Esophagus muscularis mucosa (tissue), 4 donors: ENCODE measurements at regions of chr3 and their contacts with region 1.

Region 1: GRCh38 chr3:131381444-131382291 is at the start of gene NUDT16:
- DNase-seq: peak; percentile 99
- H3K4me3 ChIP-seq: peak within 1 kb of the TSS; percentile 65 to 93 (median 84)
- H3K27ac ChIP-seq: peak within 1 kb of the TSS; percentile 90 to 93 (median 90)
- H3K4me1 ChIP-seq: peaks cover 30 to 60% (median 50%) of the 10 kb centered on the region in 4 donors
- H3K27me3 ChIP-seq: no peaks in the 10 kb centered on the region
- CTCF ChIP-seq: no peak
- EP300 ChIP-seq: no peak
- POLR2A ChIP-seq: peak; percentile 85
- total RNA-seq, gene NUDT16: 28.1 to 41.9 (median 34.0) TPM

Region 2: DNA sequence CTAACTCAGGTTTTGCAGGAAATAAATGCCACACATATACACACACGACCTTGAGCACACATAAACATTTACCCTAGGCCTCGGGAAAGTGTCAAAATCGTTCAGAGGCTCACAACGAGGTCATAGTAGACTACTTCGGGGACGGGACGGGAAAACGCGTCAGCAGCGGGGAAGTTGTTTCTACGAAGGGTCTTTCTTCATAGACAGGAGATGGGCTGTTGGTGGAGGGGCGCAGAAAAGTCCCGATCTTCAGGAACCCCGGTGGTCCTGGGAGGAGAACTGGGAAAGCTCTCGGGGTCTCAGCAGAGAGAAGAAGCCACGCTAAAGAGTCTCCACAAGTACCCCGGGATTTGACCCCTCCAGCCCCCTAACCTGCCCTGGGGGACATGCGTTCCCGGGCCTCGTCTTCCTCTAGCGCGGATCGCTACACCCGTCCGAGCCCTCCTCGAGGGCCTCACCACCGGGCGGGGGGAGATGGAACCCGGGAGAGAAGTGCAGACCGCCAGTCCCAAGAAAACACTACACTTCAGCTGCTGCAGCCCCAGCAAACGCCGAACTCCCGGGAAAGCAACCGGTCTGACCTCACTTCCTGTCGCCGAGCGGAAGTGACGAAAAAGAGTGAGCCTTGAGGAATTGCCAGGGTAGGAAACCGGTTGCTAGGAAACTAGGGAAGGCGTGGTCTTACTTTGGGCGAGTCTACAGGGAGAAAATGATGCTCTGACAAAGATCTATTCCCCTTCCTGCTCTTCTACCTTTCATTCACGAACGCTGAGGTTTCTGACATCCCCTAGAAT is 635.2 kb before region 1 on chr3 and contains the start of gene PIK3R4:
- intact Hi-C with region 1: loop called (anchors 10 kb)
- DNase-seq: peak; percentile 99
- H3K4me3 ChIP-seq: peak within 1 kb of the TSS; percentile 66 to 95 (median 78)
- H3K27ac ChIP-seq: peak within 1 kb of the TSS; percentile 81 to 91 (median 86)
- H3K4me1 ChIP-seq: peaks cover 41 to 62% (median 56%) of the 10 kb centered on the region in 4 donors
- H3K27me3 ChIP-seq: no peaks in the 10 kb centered on the region
- CTCF ChIP-seq: no peak
- EP300 ChIP-seq: no peak
- POLR2A ChIP-seq: peak; percentile 50
- total RNA-seq, gene PIK3R4: 30.6 to 40.0 (median 38.0) TPM

Region 3: DNA sequence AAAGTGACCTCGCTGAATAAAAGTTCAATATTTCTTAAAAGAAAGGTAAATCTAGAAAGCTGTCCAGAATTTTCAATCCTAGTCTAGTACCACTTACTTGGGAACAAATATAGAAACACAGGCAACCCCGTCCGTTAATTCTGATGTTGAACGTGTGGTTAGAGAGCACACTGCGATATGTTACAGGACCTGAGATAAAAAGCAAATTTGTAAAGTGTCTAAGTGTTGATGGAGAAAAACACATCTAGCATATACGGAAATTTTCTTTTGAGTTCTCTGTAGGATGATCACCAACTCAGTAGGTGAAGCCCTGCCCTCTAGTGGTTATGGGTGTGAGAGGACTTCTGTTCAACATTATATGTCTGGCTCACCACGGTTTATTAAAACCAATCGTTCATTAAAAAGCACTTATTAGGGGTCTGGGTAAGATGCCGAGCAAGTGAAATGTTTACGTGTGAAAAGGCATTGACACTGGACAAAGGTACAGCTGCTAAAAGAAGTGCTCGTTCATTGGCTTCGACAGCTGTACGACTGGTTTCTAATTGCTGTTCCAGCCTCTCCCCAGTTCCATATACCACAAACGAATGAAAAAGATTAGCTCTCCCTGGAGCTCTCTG is 488.8 kb before region 1 on chr3:
- intact Hi-C with region 1: loop called (anchors 10 kb)
- DNase-seq: no peak
- H3K4me3 ChIP-seq: peak overlapping the region; percentile 78 to 94 (median 90)
- H3K27ac ChIP-seq: peak overlapping the region; percentile 94 to 98 (median 96)
- H3K4me1 ChIP-seq: peaks cover 13 to 34% (median 32%) of the 10 kb centered on the region in 4 donors
- H3K27me3 ChIP-seq: no peaks in the 10 kb centered on the region
- CTCF ChIP-seq: peak; percentile 86 to 89 (median 86)
- EP300 ChIP-seq: no peak
- POLR2A ChIP-seq: no peak

Region 4: GRCh38 chr3:131033480-131034080 is 348.1 kb before region 1 on chr3:
- intact Hi-C with region 1: loop called (anchors 5 kb)
- DNase-seq: no peak
- H3K4me3 ChIP-seq: no peak overlapping the region
- H3K27ac ChIP-seq: no peak overlapping the region
- H3K4me1 ChIP-seq: peaks cover 0 to 11% (median 6%) of the 10 kb centered on the region in 4 donors
- H3K27me3 ChIP-seq: no peaks in the 10 kb centered on the region
- CTCF ChIP-seq: peak; percentile 41 to 58 (median 47)
- EP300 ChIP-seq: no peak
- POLR2A ChIP-seq: no peak

Region 5: GRCh38 chr3:131314318-131314717 is 67.3 kb before region 1 on chr3:
- intact Hi-C with region 1: no loop called
- DNase-seq: no peak
- H3K4me3 ChIP-seq: no peak overlapping the region
- H3K27ac ChIP-seq: no peak overlapping the region
- H3K4me1 ChIP-seq: no peaks in the 10 kb centered on the region
- H3K27me3 ChIP-seq: no peaks in the 10 kb centered on the region
- CTCF ChIP-seq: no peak
- EP300 ChIP-seq: no peak
- POLR2A ChIP-seq: no peak

Region 6: GRCh38 chr3:131329774-131330173 is 51.9 kb before region 1 on chr3:
- intact Hi-C with region 1: no loop called
- DNase-seq: no peak
- H3K4me3 ChIP-seq: no peak overlapping the region
- H3K27ac ChIP-seq: no peak overlapping the region
- H3K4me1 ChIP-seq: no peaks in the 10 kb centered on the region
- H3K27me3 ChIP-seq: no peaks in the 10 kb centered on the region
- CTCF ChIP-seq: no peak
- EP300 ChIP-seq: no peak
- POLR2A ChIP-seq: no peak

Region 7: DNA sequence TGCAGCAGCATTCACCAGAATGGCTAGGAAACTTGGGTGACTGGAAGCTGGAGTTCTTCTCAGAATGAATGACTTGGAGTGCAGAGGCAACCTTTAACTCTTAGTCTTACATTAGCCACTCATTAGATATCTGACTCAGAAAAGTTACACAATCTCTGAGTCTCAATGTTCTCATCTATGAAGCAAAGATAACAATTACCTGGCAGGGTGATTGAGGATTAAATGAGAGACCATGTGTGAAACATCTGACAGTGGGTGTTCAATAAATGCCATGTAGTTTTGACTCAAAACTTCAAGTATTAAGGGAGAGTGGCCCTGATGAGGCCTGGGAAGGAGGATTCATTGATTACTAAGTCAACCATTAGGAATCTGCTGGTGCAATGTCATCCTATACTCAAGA is 72.8 kb after region 1 on chr3:
- intact Hi-C with region 1: no loop called
- DNase-seq: no peak
- H3K4me3 ChIP-seq: no peak overlapping the region
- H3K27ac ChIP-seq: no peak overlapping the region
- H3K4me1 ChIP-seq: peaks cover 0 to 4% (median 1%) of the 10 kb centered on the region in 4 donors
- H3K27me3 ChIP-seq: no peaks in the 10 kb centered on the region
- CTCF ChIP-seq: no peak
- EP300 ChIP-seq: no peak
- POLR2A ChIP-seq: no peak

Region 8: DNA sequence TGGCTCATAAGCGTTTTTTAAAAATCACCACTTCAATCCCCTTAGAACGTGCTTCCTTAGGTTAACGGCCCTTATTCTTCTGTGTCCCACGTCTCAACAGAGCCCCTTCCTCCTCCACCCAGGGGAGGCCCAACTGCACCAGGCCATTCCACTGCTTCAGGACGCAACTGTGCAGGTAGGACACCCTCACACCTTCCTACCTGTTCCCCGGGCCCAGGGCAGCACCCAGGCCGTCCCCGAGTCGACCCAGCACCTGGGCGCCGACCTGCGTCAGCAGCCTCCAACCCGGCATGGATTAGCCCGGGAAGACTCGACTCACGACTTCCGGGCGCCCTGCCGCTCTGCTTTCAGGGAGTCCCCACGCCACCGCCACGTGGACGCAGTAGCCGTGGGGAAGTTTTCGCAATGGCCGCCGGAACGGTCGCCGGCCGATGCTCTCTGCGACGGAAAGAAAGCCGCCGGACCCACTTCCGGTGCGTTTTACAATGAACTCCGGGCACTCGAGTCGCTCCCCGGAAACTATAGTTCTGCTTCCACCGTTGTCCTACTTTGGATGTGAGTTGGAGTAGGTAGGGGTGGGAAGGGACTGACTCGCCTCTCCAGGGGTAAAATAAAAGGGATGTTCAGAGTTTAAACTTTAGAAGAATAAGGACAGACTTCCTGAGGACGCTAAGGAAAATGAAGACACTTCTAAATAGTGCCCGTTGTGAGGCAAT is 121.0 kb after region 1 on chr3 and contains the start of gene MRPL3:
- intact Hi-C with region 1: loop called (anchors 5 kb)
- DNase-seq: peak; percentile 94
- H3K4me3 ChIP-seq: peak within 1 kb of the TSS; percentile 81 to 93 (median 90)
- H3K27ac ChIP-seq: peak within 1 kb of the TSS; percentile 70 to 85 (median 78)
- H3K4me1 ChIP-seq: peaks cover 7 to 31% (median 28%) of the 10 kb centered on the region in 4 donors
- H3K27me3 ChIP-seq: no peaks in the 10 kb centered on the region
- CTCF ChIP-seq: no peak
- EP300 ChIP-seq: no peak
- POLR2A ChIP-seq: peak; percentile 5
- total RNA-seq, gene MRPL3: 50.7 to 73.4 (median 57.4) TPM